Activated B cell treated with CpG ODN at 0.5 μM for 24 hours (primary cell): ENCODE measurements at regions of chr17 and their contacts with region 1.

Region 1: DNA sequence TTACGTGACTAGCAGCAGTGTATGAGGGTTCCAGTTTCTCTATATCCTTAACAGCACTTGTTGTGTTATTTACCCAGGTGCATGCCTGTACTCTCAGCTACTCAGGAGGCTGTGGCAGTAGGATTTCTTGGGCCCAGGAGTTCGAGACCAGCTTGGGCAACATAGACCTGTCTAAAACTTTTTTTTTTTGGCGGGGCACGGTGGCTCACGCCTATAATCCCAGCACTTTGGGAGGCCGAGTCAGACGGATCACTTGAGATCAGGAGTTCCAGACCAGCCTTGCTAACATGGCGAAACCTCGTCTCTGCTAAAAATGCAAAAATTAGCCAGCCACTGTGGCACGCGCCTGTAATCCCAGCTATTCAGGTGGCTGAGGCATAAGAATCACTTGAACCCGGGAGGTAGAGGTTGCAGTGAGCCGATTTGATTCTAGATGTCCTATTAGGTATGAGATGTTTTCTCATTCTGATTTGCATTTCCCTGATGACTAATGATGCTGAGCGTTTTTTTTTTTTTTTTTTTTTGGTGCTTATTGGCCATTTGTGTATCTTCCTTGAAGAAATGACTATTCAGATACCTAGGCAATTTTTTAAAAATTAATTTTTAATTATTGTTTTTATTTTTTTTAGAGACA is 13.4 kb downstream of the CASC3 start:
- DNase-seq: no peak
- ATAC-seq: no peak
- H3K4me3 Mint-ChIP-seq: no peak overlapping the region
- H3K27ac Mint-ChIP-seq: peak overlapping the region; percentile 90
- H3K4me1 Mint-ChIP-seq: peaks cover 39% of the 10 kb centered on the region
- H3K27me3 Mint-ChIP-seq: no peaks in the 10 kb centered on the region
- CTCF ChIP-seq: no peak

Region 2: DNA sequence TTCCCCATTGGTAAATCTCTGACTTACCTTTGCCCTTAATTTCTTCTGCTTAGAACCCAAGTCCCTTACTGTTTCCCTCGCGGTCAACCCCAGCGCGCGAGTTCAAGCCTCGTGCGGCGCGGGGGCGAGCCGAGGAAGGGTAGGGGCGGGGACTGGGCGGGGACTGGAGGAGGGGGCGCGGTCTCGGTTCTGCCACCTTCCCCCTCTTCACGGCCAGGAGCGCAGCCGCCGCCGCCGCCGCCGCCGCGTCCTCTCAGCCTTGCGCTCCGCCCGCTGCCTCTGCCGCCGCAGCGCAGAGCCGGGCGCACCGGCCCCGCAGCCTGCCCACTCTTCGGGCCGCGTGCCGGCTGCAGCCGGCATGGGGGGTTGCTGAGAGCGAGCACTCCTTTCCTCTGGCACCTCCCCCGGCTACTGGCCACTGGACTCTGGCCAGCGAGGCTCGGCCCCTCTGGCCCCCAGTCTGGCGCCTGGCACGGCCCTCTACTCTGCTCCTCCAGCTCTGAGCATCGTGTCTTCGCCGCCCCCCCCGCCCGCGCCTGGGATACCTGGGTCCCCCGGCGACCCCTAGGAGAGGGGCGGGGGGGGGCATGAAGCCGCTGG is 23.7 kb after region 1 on chr17 and contains the start of gene RAPGEFL1:
- CTCF ChIA-PET with region 1: no interaction called
- POLR2A ChIA-PET with region 1: interaction called, 10 read pairs
- intact Hi-C with region 1: no loop called
- DNase-seq: peak; percentile 61
- ATAC-seq: peak; percentile 99
- H3K4me3 Mint-ChIP-seq: peak within 1 kb of the TSS; percentile 42
- H3K27ac Mint-ChIP-seq: no peak within 1 kb of the TSS
- H3K4me1 Mint-ChIP-seq: peaks cover 10% of the 10 kb centered on the region
- H3K27me3 Mint-ChIP-seq: no peaks in the 10 kb centered on the region
- CTCF ChIP-seq: no peak
- total RNA-seq, gene RAPGEFL1: 4.9 and 7.0 TPM in 2 replicates